ENCODE measurements at regions of chr11 and their contacts with region 1.

Region 1: DNA sequence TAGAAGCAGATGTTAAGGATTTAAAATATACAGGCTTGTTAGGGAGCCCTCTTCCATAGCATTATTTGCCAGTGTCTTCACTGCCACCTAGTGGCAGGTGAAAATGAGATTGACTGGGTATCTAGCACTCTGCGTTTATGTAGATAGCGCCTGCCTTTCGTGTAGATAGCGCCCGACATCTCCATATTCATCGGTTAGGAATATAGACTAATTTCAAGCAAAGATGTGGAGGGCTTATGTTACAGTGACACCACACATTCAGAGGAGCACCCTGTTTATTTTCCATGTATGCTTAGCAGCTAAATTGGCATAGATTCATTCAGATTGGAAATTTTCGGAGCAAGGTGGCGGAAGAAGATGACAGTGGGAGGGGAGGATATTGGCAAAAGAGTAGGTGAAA is 72.0 kb downstream of the SLC5A12 start:
- DNase-seq: peak; percentile 64
- H3K4me3 ChIP-seq: no peak overlapping the region
- H3K27ac ChIP-seq: no peak overlapping the region
- H3K4me1 ChIP-seq: no peaks in the 10 kb centered on the region
- H3K27me3 ChIP-seq: no peaks in the 10 kb centered on the region
- CTCF ChIP-seq: peak; percentile 25 to 69 (median 46)
- EP300 ChIP-seq: no peak
- POLR2A ChIP-seq: no peak

Region 2: GRCh38 chr11:26297189-26297975 is 352.5 kb before region 1 on chr11:
- intact Hi-C with region 1: loop called (anchors 2 kb)
- DNase-seq: no peak
- H3K4me3 ChIP-seq: no peak overlapping the region
- H3K27ac ChIP-seq: no peak overlapping the region
- H3K4me1 ChIP-seq: peaks cover 0 to 4% (median 0%) of the 10 kb centered on the region in 4 donors
- H3K27me3 ChIP-seq: no peaks in the 10 kb centered on the region
- CTCF ChIP-seq: peak; percentile 22 to 55 (median 46)
- EP300 ChIP-seq: no peak
- POLR2A ChIP-seq: no peak

Region 3: GRCh38 chr11:26558190-26558589 is 91.7 kb before region 1 on chr11:
- intact Hi-C with region 1: no loop called
- DNase-seq: no peak
- H3K4me3 ChIP-seq: no peak overlapping the region
- H3K27ac ChIP-seq: no peak overlapping the region
- H3K4me1 ChIP-seq: no peaks in the 10 kb centered on the region
- H3K27me3 ChIP-seq: no peaks in the 10 kb centered on the region
- CTCF ChIP-seq: no peak
- EP300 ChIP-seq: no peak
- POLR2A ChIP-seq: no peak

Region 4: GRCh38 chr11:26578998-26579661 is 70.8 kb before region 1 on chr11:
- intact Hi-C with region 1: no loop called
- DNase-seq: no peak
- H3K4me3 ChIP-seq: no peak overlapping the region
- H3K27ac ChIP-seq: peak overlapping the region in 1 of 4 donors; percentile 14
- H3K4me1 ChIP-seq: peaks cover 0 to 18% (median 0%) of the 10 kb centered on the region in 4 donors
- H3K27me3 ChIP-seq: no peaks in the 10 kb centered on the region
- CTCF ChIP-seq: no peak
- EP300 ChIP-seq: no peak
- POLR2A ChIP-seq: no peak

Measured in sigmoid colon (tissue), 7 donors.